Breast epithelium (tissue), 4 donors: ENCODE measurements at regions of chr1 and their contacts with region 1.

Region 1: GRCh38 chr1:54800899-54801759 is at the start of gene TTC22:
- DNase-seq: peak; percentile 70 to 76
- H3K4me3 ChIP-seq: peak within 1 kb of the TSS; percentile 19 to 73 (median 65)
- H3K27ac ChIP-seq: peak within 1 kb of the TSS; percentile 78 to 80
- H3K4me1 ChIP-seq: peaks cover 0 to 7% of the 10 kb centered on the region in 2 donors
- H3K27me3 ChIP-seq: no peaks in the 10 kb centered on the region
- CTCF ChIP-seq: peak in 2 of 3 donors; percentile 17 to 73
- POLR2A ChIP-seq: no peak
- total RNA-seq, gene TTC22: 0.32 to 15.8 (median 7.9) TPM

Region 2: GRCh38 chr1:54685335-54685905 is 115.7 kb before region 1 on chr1:
- intact Hi-C with region 1: loop called (anchors 2 kb)
- DNase-seq: no peak
- H3K4me3 ChIP-seq: no peak overlapping the region
- H3K27ac ChIP-seq: no peak overlapping the region
- H3K4me1 ChIP-seq: no peaks in the 10 kb centered on the region
- H3K27me3 ChIP-seq: no peaks in the 10 kb centered on the region
- CTCF ChIP-seq: no peak
- POLR2A ChIP-seq: no peak

Region 3: GRCh38 chr1:54833121-54833520 is 32.0 kb after region 1 on chr1:
- intact Hi-C with region 1: no loop called
- DNase-seq: peak; percentile 1 to 42
- H3K4me3 ChIP-seq: no peak overlapping the region
- H3K27ac ChIP-seq: no peak overlapping the region
- H3K4me1 ChIP-seq: peaks cover 0 to 4% of the 10 kb centered on the region in 2 donors
- H3K27me3 ChIP-seq: no peaks in the 10 kb centered on the region
- CTCF ChIP-seq: no peak
- POLR2A ChIP-seq: no peak